RWPE1 (cell line): ENCODE measurements at regions of chr22 and their contacts with region 1.

Region 1: GRCh38 chr22:17171313-17172171 is 12.5 kb upstream of the HDHD5 start:
- DNase-seq: peak; percentile 66
- H3K27ac ChIP-seq: peak overlapping the region; percentile 82
- CTCF ChIP-seq: peak; percentile 96

Region 2: GRCh38 chr22:16949561-16949960 is 222.0 kb before region 1 on chr22:
- CTCF ChIA-PET with region 1: no interaction called
- POLR2A ChIA-PET with region 1: no interaction called
- DNase-seq: no peak
- H3K27ac ChIP-seq: no peak overlapping the region
- CTCF ChIP-seq: no peak

Region 3: GRCh38 chr22:17057959-17058814 is 113.4 kb before region 1 on chr22:
- CTCF ChIA-PET with region 1: no interaction called
- POLR2A ChIA-PET with region 1: no interaction called
- DNase-seq: peak; percentile 59
- H3K27ac ChIP-seq: no peak overlapping the region
- CTCF ChIP-seq: peak; percentile 92

Region 4: DNA sequence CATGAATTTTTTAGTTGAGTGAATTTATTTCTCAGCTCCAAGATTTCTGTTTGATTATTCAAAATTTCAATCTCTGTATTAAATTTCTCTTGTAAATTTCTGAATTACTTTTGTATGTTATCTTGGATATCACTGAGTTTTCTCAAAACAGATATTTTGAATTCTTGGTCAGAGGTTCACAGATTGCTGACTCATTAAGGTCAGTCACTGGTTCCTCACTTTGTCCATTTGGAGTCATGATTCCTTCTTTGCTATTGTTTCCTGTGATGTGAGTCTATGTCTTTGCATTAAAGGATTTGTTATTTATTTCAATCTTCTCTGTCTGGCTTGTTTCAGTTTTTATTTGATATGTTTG is 96.9 kb before region 1 on chr22:
- CTCF ChIA-PET with region 1: interaction called, 12 read pairs
- POLR2A ChIA-PET with region 1: no interaction called
- DNase-seq: no peak
- H3K27ac ChIP-seq: no peak overlapping the region
- CTCF ChIP-seq: no peak

Region 5: DNA sequence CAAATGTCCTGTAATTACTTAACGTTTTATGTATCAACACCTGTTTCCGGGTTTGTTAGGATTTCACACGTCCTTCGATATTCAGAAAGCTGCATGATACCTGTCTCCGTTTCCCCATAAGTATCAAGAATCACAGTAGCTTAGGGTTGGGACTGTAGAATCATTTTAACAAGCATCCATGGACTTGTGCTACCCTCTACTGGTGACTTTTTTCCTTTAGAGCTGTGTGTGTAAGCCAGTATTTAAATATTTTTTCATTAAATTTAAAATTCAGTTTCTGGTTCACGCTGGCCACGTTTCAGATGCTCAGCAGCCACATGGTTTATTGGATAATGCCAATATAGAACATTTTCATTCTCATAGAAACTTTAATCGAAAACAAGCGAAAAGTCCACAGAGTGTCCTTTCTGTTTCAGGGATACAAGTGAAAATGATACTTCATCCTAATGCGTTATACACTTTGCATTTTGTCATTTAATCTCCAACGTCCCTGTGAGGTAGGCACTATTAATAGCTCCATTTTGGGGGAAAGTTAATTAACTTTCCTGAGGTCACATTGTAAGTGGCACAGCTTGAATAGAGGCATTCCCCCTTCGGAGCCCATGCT is 330.2 kb after region 1 on chr22:
- CTCF ChIA-PET with region 1: interaction called, 35 read pairs
- POLR2A ChIA-PET with region 1: no interaction called
- DNase-seq: peak; percentile 46
- H3K27ac ChIP-seq: no peak overlapping the region
- CTCF ChIP-seq: peak; percentile 66

Region 6: GRCh38 chr22:17513612-17514011 is 342.1 kb after region 1 on chr22:
- CTCF ChIA-PET with region 1: interaction called, 10 read pairs
- POLR2A ChIA-PET with region 1: no interaction called
- DNase-seq: no peak
- H3K27ac ChIP-seq: no peak overlapping the region
- CTCF ChIP-seq: no peak